ENCODE measurements at regions of chr4 and their contacts with region 1.

Region 1: DNA sequence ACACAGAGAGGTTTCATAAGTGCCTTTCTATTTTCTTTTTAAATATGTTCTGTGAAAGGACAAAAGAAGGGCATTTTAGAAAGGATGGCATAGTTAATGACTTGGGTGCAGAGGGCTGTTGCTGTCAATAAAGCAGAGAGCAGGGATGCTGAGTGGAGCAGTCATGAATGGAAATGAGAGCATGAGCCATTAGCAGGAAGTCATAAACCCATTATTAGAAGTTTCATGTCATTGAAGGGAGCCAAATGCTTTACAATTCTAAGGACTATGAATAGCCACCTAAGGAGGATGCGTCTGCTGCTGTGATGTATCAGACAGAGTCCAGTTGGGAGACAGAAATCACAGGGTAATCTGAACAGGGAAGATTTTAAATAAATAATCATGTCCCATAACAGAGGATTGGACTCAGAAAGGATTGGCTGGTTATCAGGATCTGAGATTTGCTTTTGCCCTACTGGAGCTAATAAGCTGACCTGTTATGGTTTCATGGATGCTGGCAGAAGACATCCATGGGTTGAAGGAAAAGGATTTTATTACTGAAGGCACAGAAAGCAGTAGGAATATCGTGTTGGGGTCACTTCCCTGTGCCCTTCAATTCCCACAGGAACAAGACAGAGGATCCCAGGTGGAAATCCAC is 47.5 kb upstream of the WDR19 start:
- DNase-seq: no peak
- ATAC-seq: peak in 2 of 8 donors; percentile 6 to 15
- H3K4me3 ChIP-seq: no peak overlapping the region
- H3K27ac ChIP-seq: no peak overlapping the region
- H3K4me1 ChIP-seq: peaks cover 0 to 10% (median 7%) of the 10 kb centered on the region in 9 donors
- H3K27me3 ChIP-seq: no peaks in the 10 kb centered on the region
- CTCF ChIP-seq: no peak

Region 2: GRCh38 chr4:38759113-38759789 is 375.6 kb before region 1 on chr4:
- intact Hi-C with region 1: loop called in 4 of 10 experiments (anchors 10 kb)
- DNase-seq: peak; percentile 31 to 75
- ATAC-seq: peak; percentile 75 to 92 (median 86)
- H3K4me3 ChIP-seq: no peak overlapping the region
- H3K27ac ChIP-seq: peak overlapping the region in 1 of 10 donors; percentile 10
- H3K4me1 ChIP-seq: peaks cover 0 to 43% (median 4%) of the 10 kb centered on the region in 9 donors
- H3K27me3 ChIP-seq: no peaks in the 10 kb centered on the region
- CTCF ChIP-seq: peak; percentile 50 to 83 (median 75)

Region 3: GRCh38 chr4:38768968-38769394 is 365.8 kb before region 1 on chr4:
- intact Hi-C with region 1: loop called in 2 of 10 experiments (anchors 10 kb)
- DNase-seq: no peak
- ATAC-seq: peak in 6 of 8 donors; percentile 28 to 78 (median 40)
- H3K4me3 ChIP-seq: no peak overlapping the region
- H3K27ac ChIP-seq: peak overlapping the region in 3 of 10 donors; percentile 1 to 51 (median 42)
- H3K4me1 ChIP-seq: peaks cover 0 to 13% (median 0%) of the 10 kb centered on the region in 9 donors
- H3K27me3 ChIP-seq: no peaks in the 10 kb centered on the region
- CTCF ChIP-seq: no peak

Region 4: GRCh38 chr4:38902695-38903094 is 232.1 kb before region 1 on chr4:
- intact Hi-C with region 1: loop called (anchors 1 to 10 kb)
- DNase-seq: no peak
- ATAC-seq: peak in 5 of 8 donors; percentile 60 to 74 (median 70)
- H3K4me3 ChIP-seq: no peak overlapping the region
- H3K27ac ChIP-seq: no peak overlapping the region
- H3K4me1 ChIP-seq: peaks cover 0 to 27% (median 0%) of the 10 kb centered on the region in 9 donors
- H3K27me3 ChIP-seq: no peaks in the 10 kb centered on the region
- CTCF ChIP-seq: peak in 8 of 9 donors; percentile 15 to 61 (median 46)

Region 5: GRCh38 chr4:38967260-38968095 is 167.3 kb before region 1 on chr4:
- intact Hi-C with region 1: no loop called
- DNase-seq: no peak
- ATAC-seq: peak in 5 of 8 donors; percentile 38 to 87 (median 65)
- H3K4me3 ChIP-seq: no peak overlapping the region
- H3K27ac ChIP-seq: peak overlapping the region in 3 of 10 donors; percentile 15 to 53 (median 48)
- H3K4me1 ChIP-seq: no peaks in the 10 kb centered on the region
- H3K27me3 ChIP-seq: no peaks in the 10 kb centered on the region
- CTCF ChIP-seq: no peak

Region 6: DNA sequence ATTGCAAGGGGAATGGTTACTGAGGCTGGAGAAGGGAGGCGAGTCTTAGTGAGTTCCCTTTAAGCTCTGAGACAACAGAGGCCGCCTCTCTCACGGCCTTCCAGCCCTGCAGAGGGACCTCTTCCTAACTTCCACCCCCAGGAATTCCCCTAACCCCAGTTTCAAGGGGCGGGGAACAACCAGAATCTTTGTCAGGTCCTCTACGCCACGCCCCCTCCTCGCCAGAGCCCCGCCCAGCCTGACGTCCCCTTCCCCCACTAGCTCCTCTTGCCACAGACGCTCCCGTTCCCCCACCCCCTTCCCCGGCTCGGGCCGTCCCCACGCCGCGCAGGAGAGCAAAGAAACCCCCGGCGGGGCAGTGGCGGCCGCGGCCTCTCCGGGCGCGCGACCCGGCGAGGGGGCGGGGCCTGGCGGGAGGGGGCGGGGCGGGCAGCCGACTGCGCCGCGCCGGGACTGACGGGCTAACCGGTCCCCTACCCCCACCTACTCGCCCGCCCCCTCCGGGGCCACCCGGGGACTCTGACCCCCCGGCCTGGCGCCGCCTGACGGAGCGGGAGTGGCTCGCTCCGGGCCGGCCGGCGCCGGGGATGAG is 90.3 kb before region 1 on chr4:
- intact Hi-C with region 1: loop called in 1 of 10 experiments (anchors 10 kb)
- DNase-seq: peak; percentile 93 to 96
- ATAC-seq: peak; percentile 88 to 95 (median 92)
- H3K4me3 ChIP-seq: peak overlapping the region; percentile 59 to 98 (median 70)
- H3K27ac ChIP-seq: peak overlapping the region; percentile 76 to 98 (median 95)
- H3K4me1 ChIP-seq: peaks cover 0 to 56% (median 42%) of the 10 kb centered on the region in 9 donors
- H3K27me3 ChIP-seq: no peaks in the 10 kb centered on the region
- CTCF ChIP-seq: peak in 1 of 9 donors; percentile 34

Region 7: DNA sequence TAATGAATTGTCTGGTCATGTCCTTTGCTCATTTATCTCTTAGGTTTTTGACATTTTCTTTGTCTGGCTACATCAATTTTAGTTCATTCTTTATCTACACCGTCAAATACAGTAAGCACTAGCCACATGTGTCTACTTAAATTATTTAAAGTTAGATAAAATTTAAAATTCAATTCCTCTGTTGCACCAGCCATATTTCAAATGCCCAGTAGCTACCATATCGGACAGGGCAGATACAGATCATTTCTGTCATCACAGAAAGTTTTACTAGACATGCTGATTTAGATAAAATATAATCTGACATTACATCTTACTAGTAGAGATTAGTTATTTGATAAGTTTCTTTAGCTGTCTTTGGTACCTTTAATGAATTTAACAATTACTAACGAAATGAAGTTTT is 108.7 kb after region 1 on chr4:
- intact Hi-C with region 1: no loop called
- DNase-seq: no peak
- ATAC-seq: no peak
- H3K4me3 ChIP-seq: no peak overlapping the region
- H3K27ac ChIP-seq: no peak overlapping the region
- H3K4me1 ChIP-seq: no peaks in the 10 kb centered on the region
- H3K27me3 ChIP-seq: no peaks in the 10 kb centered on the region
- CTCF ChIP-seq: no peak